ENCODE measurements at regions of chr18 and their contacts with region 1.

Region 1: DNA sequence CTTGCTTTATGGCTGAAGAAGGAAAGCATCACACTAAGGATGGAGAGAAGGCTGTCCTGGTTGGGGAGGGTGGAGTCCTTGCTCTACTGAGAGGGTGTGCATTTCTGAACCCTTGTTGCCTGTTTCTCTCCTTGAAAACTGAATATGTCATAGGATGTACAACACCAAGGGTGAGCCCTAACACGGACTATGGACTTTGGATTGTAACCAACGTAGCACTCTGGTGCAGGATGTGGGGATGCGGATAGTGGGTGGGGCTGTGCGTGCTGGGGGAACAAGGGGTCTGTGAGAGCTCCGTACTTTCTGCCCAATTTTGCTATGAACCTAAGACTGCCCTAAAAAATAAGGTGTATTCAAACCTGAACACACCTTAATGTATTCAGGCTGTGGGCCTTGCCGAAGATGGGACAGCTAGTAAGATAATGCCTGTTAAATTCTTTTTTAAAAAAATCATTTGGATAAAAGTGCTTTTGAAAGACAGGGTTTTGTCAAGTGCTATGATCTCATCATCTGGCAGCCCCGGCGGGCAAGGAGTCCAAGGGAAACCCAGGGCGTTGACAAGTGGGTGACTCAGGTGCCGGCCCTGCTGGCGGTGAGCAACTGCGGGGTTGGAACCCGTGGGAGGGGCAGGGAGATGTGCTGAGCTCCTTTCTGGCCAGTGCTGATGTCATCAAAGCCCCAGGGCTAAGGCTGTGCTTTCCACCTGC is 54.0 kb downstream of the GATA6 start:
- DNase-seq: peak; percentile 65 to 78
- H3K4me3 ChIP-seq: no peak overlapping the region
- H3K4me3 Mint-ChIP-seq: no peak overlapping the region
- H3K27ac Mint-ChIP-seq: peak overlapping the region; percentile 54
- H3K4me1 ChIP-seq: peaks cover 32% of the 10 kb centered on the region
- H3K4me1 Mint-ChIP-seq: peaks cover 28% of the 10 kb centered on the region
- H3K27me3 ChIP-seq: no peaks in the 10 kb centered on the region
- H3K27me3 Mint-ChIP-seq: no peaks in the 10 kb centered on the region
- CTCF ChIP-seq: no peak

Region 2: GRCh38 chr18:22200611-22201225 is 22.7 kb before region 1 on chr18:
- CTCF ChIA-PET with region 1: no interaction called
- POLR2A ChIA-PET with region 1: no interaction called
- intact Hi-C with region 1: no loop called
- DNase-seq: no peak
- H3K4me3 ChIP-seq: no peak overlapping the region
- H3K4me3 Mint-ChIP-seq: no peak overlapping the region
- H3K27ac Mint-ChIP-seq: peak overlapping the region; percentile 29
- H3K4me1 ChIP-seq: peaks cover 10% of the 10 kb centered on the region
- H3K4me1 Mint-ChIP-seq: peaks cover 57% of the 10 kb centered on the region
- H3K27me3 ChIP-seq: no peaks in the 10 kb centered on the region
- H3K27me3 Mint-ChIP-seq: no peaks in the 10 kb centered on the region
- CTCF ChIP-seq: no peak

Region 3: GRCh38 chr18:22348521-22349316 is 125.3 kb after region 1 on chr18:
- CTCF ChIA-PET with region 1: no interaction called
- POLR2A ChIA-PET with region 1: no interaction called
- intact Hi-C with region 1: loop called (anchors 10 kb)
- DNase-seq: peak; percentile 55 to 62
- H3K4me3 ChIP-seq: peak overlapping the region; percentile 44
- H3K4me3 Mint-ChIP-seq: peak overlapping the region; percentile 79
- H3K27ac Mint-ChIP-seq: no peak overlapping the region
- H3K4me1 ChIP-seq: peaks cover 12% of the 10 kb centered on the region
- H3K4me1 Mint-ChIP-seq: peaks cover 14% of the 10 kb centered on the region
- H3K27me3 ChIP-seq: no peaks in the 10 kb centered on the region
- H3K27me3 Mint-ChIP-seq: peaks cover 2% of the 10 kb centered on the region
- CTCF ChIP-seq: no peak

Region 4: DNA sequence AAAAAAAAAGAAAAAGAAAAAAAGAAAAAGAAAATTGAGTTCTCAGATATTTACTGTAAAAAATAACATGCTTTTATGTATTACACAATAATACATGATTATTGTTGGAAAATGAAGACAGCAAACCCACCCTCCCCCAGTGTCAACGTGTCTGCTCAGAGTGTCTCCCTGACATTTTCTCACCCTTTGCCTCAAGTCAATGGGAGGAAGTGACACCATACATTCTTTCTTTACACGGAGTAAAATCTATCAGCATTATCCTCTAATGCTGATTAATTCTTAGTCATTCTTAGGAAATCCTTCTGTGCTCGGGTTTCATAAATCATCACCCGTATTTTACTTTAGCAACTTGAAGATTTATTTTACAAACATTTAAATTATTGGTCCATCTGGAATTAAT is 162.3 kb after region 1 on chr18:
- CTCF ChIA-PET with region 1: no interaction called
- POLR2A ChIA-PET with region 1: no interaction called
- intact Hi-C with region 1: no loop called
- DNase-seq: no peak
- H3K4me3 ChIP-seq: no peak overlapping the region
- H3K4me3 Mint-ChIP-seq: no peak overlapping the region
- H3K27ac Mint-ChIP-seq: no peak overlapping the region
- H3K4me1 ChIP-seq: peaks cover 5% of the 10 kb centered on the region; the same call in 1 of the 2 replicates
- H3K4me1 Mint-ChIP-seq: no peaks in the 10 kb centered on the region
- H3K27me3 ChIP-seq: no peaks in the 10 kb centered on the region
- H3K27me3 Mint-ChIP-seq: no peaks in the 10 kb centered on the region
- CTCF ChIP-seq: no peak